ENCODE measurements at regions of chr13 and their contacts with region 1.

Region 1: GRCh38 chr13:108155185-108156106 is 59.9 kb downstream of the LIG4 start:
- DNase-seq: peak; percentile 74
- H3K4me3 ChIP-seq: no peak overlapping the region
- H3K27ac ChIP-seq: peak overlapping the region; percentile 60 to 82 (median 72)
- H3K4me1 ChIP-seq: peaks cover 0 to 13% (median 3%) of the 10 kb centered on the region in 4 donors
- H3K27me3 ChIP-seq: no peaks in the 10 kb centered on the region
- CTCF ChIP-seq: peak; percentile 81 to 89 (median 84)
- EP300 ChIP-seq: no peak
- POLR2A ChIP-seq: no peak

Region 2: GRCh38 chr13:107205303-107206104 is 949.9 kb before region 1 on chr13:
- in situ Hi-C with region 1: loop called (anchors 10 to 25 kb)
- intact Hi-C with region 1: loop called (anchors 5 kb)
- DNase-seq: peak; percentile 61
- H3K4me3 ChIP-seq: no peak overlapping the region
- H3K27ac ChIP-seq: no peak overlapping the region
- H3K4me1 ChIP-seq: peaks cover 0 to 3% (median 1%) of the 10 kb centered on the region in 4 donors
- H3K27me3 ChIP-seq: peaks cover 3% of the 10 kb centered on the region
- CTCF ChIP-seq: peak; percentile 62 to 98 (median 96)
- EP300 ChIP-seq: no peak
- POLR2A ChIP-seq: no peak